Activated naive CD4-positive, alpha-beta T cell treated with anti-CD3 and anti-CD28 coated beads for 36 hours (primary cell): ENCODE measurements at regions of chr12 and their contacts with region 1.

Region 1: DNA sequence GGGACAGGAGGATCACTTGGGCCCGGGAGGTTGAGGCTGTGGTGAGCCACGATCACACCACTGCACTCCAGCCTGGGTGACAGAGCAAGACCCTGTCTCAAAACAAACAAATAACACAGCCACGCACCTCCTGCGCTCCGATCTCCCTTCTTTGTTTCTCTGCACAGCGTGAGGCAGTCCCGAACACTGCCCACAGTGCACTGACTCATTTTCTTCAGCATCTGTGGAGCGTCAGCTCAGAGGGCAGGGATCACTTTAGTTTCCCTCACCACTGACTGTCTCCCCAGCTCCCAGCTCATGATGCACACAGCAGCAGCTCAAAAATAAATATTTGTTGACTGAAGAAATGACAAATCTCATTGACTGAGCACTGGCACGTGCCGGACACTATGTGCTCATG is 883 bp upstream of the MYL2 start:
- DNase-seq: no peak
- H3K4me3 Mint-ChIP-seq: no peak overlapping the region
- H3K27ac Mint-ChIP-seq: no peak overlapping the region
- H3K4me1 Mint-ChIP-seq: no peaks in the 10 kb centered on the region
- H3K27me3 Mint-ChIP-seq: no peaks in the 10 kb centered on the region

Region 2: GRCh38 chr12:109736552-109737108 is 1184.6 kb before region 1 on chr12:
- CTCF ChIA-PET with region 1: no interaction called
- intact Hi-C with region 1: no loop called
- DNase-seq: peak; percentile 48
- H3K4me3 Mint-ChIP-seq: no peak overlapping the region
- H3K27ac Mint-ChIP-seq: no peak overlapping the region
- H3K4me1 Mint-ChIP-seq: no peaks in the 10 kb centered on the region
- H3K27me3 Mint-ChIP-seq: peaks cover 22% of the 10 kb centered on the region

Region 3: GRCh38 chr12:111304642-111305071 is 383.4 kb after region 1 on chr12:
- CTCF ChIA-PET with region 1: interaction called, 10 read pairs
- intact Hi-C with region 1: no loop called
- DNase-seq: peak; percentile 64
- H3K4me3 Mint-ChIP-seq: no peak overlapping the region
- H3K27ac Mint-ChIP-seq: no peak overlapping the region
- H3K4me1 Mint-ChIP-seq: peaks cover 4% of the 10 kb centered on the region
- H3K27me3 Mint-ChIP-seq: no peaks in the 10 kb centered on the region